Psoas muscle (tissue), 8 donors: ENCODE measurements at regions of chr7 and their contacts with region 1.

Region 1: GRCh38 chr7:125516194-125516593 is 586.6 kb upstream of the POT1 start:
- DNase-seq: no peak
- ATAC-seq: no peak
- H3K4me3 ChIP-seq: no peak overlapping the region
- H3K27ac ChIP-seq: no peak overlapping the region
- H3K4me1 ChIP-seq: no peaks in the 10 kb centered on the region
- H3K27me3 ChIP-seq: no peaks in the 10 kb centered on the region
- CTCF ChIP-seq: no peak

Region 2: DNA sequence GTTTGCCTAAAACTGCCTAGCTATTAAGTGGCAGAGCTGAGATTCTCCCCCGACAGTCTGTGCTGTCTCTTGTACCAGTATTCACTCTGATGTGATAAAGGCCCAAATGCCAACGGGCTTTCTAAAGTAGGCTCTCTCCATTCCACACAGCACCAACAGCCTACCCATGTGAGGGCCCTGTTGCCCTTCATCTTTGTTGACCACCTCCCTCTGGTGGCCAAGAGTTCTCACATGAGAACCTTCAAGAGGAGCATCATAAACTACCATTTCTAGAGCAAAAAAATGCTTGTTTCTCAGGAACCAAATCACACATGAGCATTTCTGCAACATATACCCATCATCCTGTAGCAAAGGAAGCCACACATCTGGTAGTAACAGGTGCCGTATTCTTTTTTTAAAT is 1550.8 kb after region 1 on chr7:
- intact Hi-C with region 1: loop called in 1 of 2 experiments (anchors 5 kb)
- DNase-seq: no peak
- ATAC-seq: no peak
- H3K4me3 ChIP-seq: no peak overlapping the region
- H3K27ac ChIP-seq: no peak overlapping the region
- H3K4me1 ChIP-seq: no peaks in the 10 kb centered on the region
- H3K27me3 ChIP-seq: no peaks in the 10 kb centered on the region
- CTCF ChIP-seq: no peak